Dorsolateral prefrontal cortex (tissue), 120 donors: ENCODE measurements at regions of chr5 and their contacts with region 1.

Region 1: GRCh38 chr5:65102828-65103711 is 334.3 kb downstream of the CWC27 start:
- DNase-seq: peak in 7 of 10 donors; percentile 11 to 65 (median 34)
- H3K4me3 ChIP-seq: peak overlapping the region; percentile 43 to 83 (median 66)
- H3K27ac ChIP-seq: peak overlapping the region in 50 of 59 donors; percentile 18 to 88 (median 68)
- H3K27me3 ChIP-seq: no peaks in the 10 kb centered on the region
- CTCF ChIP-seq: peak in 41 of 56 donors; percentile 12 to 59 (median 35)

Region 2: GRCh38 chr5:64811050-64811640 is 291.9 kb before region 1 on chr5:
- intact Hi-C with region 1: loop called in 1 of 2 experiments (anchors 10 kb)
- DNase-seq: no peak
- H3K4me3 ChIP-seq: no peak overlapping the region
- H3K27ac ChIP-seq: no peak overlapping the region
- H3K27me3 ChIP-seq: no peaks in the 10 kb centered on the region
- CTCF ChIP-seq: peak; percentile 59 to 93 (median 73)

Region 3: DNA sequence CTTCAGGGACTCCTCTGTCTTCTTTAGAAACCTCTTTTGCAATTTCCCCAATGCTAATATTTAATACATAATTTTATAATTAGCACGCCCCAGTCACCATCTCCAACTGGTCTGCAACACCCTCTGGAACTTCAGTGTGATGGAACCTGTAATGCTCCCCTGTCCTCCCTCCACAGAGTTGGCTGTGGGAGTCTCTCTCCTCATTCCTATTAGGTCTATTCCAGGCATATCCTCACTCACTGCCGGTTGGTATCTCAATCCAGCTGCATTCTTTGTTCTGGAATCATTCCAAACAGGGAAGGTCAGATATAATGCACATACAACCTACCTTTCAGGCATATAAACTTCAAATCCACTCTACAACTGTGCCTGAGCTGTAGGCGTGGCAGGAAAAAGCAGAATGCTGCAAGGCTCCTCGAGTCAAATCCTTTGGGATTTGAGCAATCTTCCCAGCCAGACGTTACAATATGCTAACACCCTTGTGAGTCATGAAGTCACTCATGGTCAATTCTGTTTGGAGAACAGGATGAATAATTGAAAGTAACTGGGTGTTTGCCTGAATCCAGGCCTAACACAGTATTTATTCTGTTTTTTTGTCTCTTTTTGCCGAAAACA is 40.5 kb before region 1 on chr5:
- intact Hi-C with region 1: no loop called
- DNase-seq: no peak
- H3K4me3 ChIP-seq: no peak overlapping the region
- H3K27ac ChIP-seq: peak overlapping the region in 1 of 59 donors; percentile 11
- H3K27me3 ChIP-seq: peaks cover 0 to 20% (median 0%) of the 10 kb centered on the region in 45 donors
- CTCF ChIP-seq: no peak